BJ (cell line): ENCODE measurements at regions of chr4 and their contacts with region 1.

Region 1: GRCh38 chr4:99405433-99406115 is 29.6 kb downstream of the ADH7 start:
- DNase-seq: no peak
- H3K4me3 ChIP-seq: no peak overlapping the region
- H3K27me3 ChIP-seq: no peaks in the 10 kb centered on the region
- CTCF ChIP-seq: peak; percentile 90

Region 2: DNA sequence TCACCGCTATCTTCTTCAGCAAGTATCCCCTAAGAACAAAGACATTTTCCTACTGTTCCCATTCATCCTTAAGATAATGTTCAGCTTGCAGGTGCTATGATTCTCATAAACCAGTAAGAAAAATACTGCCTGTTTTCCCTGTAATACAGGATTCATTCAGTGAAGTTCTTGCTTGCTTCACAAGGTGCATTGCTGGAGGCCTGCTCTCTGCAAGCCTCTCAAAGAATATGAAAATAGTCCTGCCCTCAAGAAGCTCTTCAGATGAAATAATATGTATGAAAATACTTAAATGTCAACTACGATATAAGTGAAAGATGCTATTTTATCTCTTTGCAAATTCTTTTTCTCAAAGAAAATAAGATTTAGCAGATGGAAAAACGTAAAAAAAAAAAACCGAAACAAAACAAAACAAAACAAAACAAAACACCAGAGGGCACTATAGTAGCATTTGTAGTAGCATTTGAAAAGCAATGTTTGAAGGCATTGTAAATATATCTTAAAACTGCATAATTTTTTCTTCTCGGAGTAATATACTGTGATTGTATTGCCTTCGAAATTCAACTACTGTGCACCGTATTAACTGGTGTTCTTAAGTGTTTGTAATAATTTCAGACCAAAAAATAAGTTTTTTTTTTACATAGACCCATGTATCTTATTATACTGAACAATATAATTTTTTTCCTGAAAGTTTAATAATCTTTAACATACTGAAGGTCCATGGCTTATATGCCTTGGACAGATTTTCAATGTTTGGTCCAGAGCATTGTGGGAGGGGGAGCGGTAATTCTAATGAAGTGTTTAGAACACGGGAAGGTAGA is 287.5 kb before region 1 on chr4:
- CTCF ChIA-PET with region 1: interaction called, 10 read pairs
- POLR2A ChIA-PET with region 1: no interaction called
- DNase-seq: no peak
- H3K4me3 ChIP-seq: no peak overlapping the region
- H3K27me3 ChIP-seq: no peaks in the 10 kb centered on the region
- CTCF ChIP-seq: peak; percentile 10; the same call in 1 of the 2 replicates

Region 3: GRCh38 chr4:99201690-99202089 is 203.9 kb before region 1 on chr4:
- CTCF ChIA-PET with region 1: interaction called, 54 read pairs
- POLR2A ChIA-PET with region 1: interaction called, 3 read pairs
- DNase-seq: no peak
- H3K4me3 ChIP-seq: no peak overlapping the region
- H3K27me3 ChIP-seq: no peaks in the 10 kb centered on the region
- CTCF ChIP-seq: peak; percentile 27; the same call in 1 of the 2 replicates

Region 4: GRCh38 chr4:99383833-99384392 is 21.7 kb before region 1 on chr4:
- CTCF ChIA-PET with region 1: interaction called, 21 read pairs
- POLR2A ChIA-PET with region 1: no interaction called
- DNase-seq: peak; percentile 98
- H3K4me3 ChIP-seq: no peak overlapping the region
- H3K27me3 ChIP-seq: no peaks in the 10 kb centered on the region
- CTCF ChIP-seq: no peak

Region 5: DNA sequence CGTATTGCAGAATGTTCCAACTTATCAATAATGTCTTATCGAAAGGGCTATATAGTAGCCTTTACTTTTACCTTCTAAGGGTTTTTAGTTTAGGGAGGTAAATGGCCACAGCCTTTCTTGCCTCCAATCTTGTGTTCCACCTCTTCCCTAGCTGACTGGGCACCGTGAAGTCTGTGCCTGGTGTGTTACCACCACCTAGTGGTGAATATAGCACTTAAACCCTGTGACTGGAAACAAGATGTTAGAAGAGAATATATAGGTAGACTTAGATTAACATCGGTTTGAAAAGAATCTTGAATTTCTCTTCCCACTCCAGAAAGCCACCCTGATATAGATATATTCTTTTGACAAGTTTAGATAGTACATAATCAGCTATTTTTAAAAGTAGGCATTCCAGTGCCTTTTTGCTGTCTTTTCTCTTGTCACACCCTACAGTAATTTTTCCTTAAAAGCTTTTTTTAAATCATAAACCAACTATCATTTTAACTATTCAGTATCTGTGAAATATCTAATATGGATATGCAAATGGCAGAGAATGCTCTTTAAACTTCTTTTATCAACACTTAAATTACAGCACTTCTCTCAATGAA is 57.4 kb after region 1 on chr4:
- CTCF ChIA-PET with region 1: interaction called, 22 read pairs
- POLR2A ChIA-PET with region 1: no interaction called
- DNase-seq: no peak
- H3K4me3 ChIP-seq: no peak overlapping the region
- H3K27me3 ChIP-seq: no peaks in the 10 kb centered on the region
- CTCF ChIP-seq: peak; percentile 76